Mammary epithelial cell (primary cell): ENCODE measurements at regions of chr4 and their contacts with region 1.

Region 1: DNA sequence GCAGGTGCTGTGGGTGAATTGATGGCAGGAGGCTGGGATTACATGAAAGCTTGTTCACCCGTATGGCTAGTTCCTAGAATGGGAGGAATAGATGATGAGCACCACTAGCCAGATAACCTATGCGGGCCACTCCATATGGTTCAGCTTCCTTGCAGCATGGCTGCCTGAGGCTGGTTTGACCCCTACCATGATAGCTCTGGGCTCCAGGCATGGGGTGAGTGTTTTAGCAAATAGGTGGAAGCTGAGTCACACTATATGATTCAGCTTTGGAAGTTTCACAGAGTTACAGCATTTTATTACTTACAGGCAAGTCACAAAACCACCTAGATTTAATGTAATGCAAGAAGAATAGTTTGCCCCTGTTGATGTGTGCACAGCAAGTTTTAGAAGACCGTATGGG is 603.2 kb downstream of the STIM2 start:
- DNase-seq: peak; percentile 32
- H3K4me3 ChIP-seq: no peak overlapping the region
- H3K27ac ChIP-seq: no peak overlapping the region
- H3K4me1 ChIP-seq: no peaks in the 10 kb centered on the region
- H3K27me3 ChIP-seq: no peaks in the 10 kb centered on the region
- CTCF ChIP-seq: no peak

Region 2: DNA sequence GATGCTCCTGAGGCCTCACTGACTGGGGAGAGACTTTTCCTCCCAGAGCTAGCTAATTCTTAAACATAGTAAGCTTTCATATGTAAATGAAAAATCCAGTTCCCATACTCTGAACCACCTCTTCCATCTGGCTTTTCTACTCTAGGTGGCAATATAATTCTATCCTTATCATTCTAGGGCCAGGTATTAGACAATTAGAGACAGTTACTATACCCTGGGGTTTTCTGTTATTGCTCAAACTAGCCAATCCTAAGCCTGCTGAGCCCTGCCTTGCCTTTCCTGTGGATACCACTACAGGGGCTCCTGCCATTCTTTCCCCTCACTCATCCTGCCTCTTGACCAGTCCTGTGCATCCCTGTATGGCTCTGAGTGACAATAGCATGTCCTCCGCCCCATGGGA is 51.2 kb before region 1 on chr4:
- CTCF ChIA-PET with region 1: no interaction called
- dilution Hi-C with region 1: loop called (anchors 5 kb)
- in situ Hi-C with region 1: no loop called
- intact Hi-C with region 1: no loop called
- DNase-seq: no peak
- H3K4me3 ChIP-seq: no peak overlapping the region
- H3K27ac ChIP-seq: no peak overlapping the region
- H3K4me1 ChIP-seq: no peaks in the 10 kb centered on the region
- H3K27me3 ChIP-seq: no peaks in the 10 kb centered on the region
- CTCF ChIP-seq: peak in 1 of 2 donors; percentile 24